ENCODE measurements at regions of chr11 and their contacts with region 1.

Region 1: GRCh38 chr11:67317205-67317887 is 14.0 kb downstream of the SSH3 start:
- DNase-seq: peak; percentile 93
- ATAC-seq: peak; percentile 93
- H3K4me3 ChIP-seq: peak overlapping the region; percentile 64 to 85 (median 84)
- H3K27ac ChIP-seq: peak overlapping the region; percentile 76
- H3K4me1 ChIP-seq: peaks cover 15% of the 10 kb centered on the region
- H3K27me3 ChIP-seq: no peaks in the 10 kb centered on the region
- CTCF ChIP-seq: peak; percentile 100
- EP300 ChIP-seq: no peak
- POLR2A ChIP-seq: peak; percentile 48 to 95; a peak in 2 of 4 replicates
- RAD21 ChIP-seq: peak; percentile 98

Region 2: GRCh38 chr11:67082035-67082791 is 235.1 kb before region 1 on chr11:
- CTCF ChIA-PET with region 1: interaction called, 8 read pairs
- POLR2A ChIA-PET with region 1: interaction called, 6 read pairs
- in situ Hi-C with region 1: loop called (anchors 5 kb)
- intact Hi-C with region 1: loop called (anchors 5 kb)
- DNase-seq: no peak
- ATAC-seq: peak; percentile 21
- H3K4me3 ChIP-seq: peak overlapping the region in 2 of 3 experiments; percentile 36 to 55; a peak in 5 of 6 replicates
- H3K27ac ChIP-seq: no peak overlapping the region
- H3K4me1 ChIP-seq: peaks cover 31% of the 10 kb centered on the region
- H3K27me3 ChIP-seq: peaks cover 1 to 15% of the 10 kb centered on the region in 2 experiments; a peak in 4 of 5 replicates
- CTCF ChIP-seq: peak; percentile 50
- EP300 ChIP-seq: no peak
- POLR2A ChIP-seq: no peak
- RAD21 ChIP-seq: no peak

Region 3: GRCh38 chr11:67118801-67119584 is 198.4 kb before region 1 on chr11 and contains the start of gene KDM2A:
- CTCF ChIA-PET with region 1: no interaction called
- POLR2A ChIA-PET with region 1: no interaction called
- in situ Hi-C with region 1: no loop called
- intact Hi-C with region 1: loop called (anchors 10 kb)
- DNase-seq: peak; percentile 93
- ATAC-seq: peak; percentile 83
- H3K4me3 ChIP-seq: peak within 1 kb of the TSS; percentile 82 to 100 (median 86)
- H3K27ac ChIP-seq: peak within 1 kb of the TSS; percentile 76
- H3K4me1 ChIP-seq: peaks cover 56% of the 10 kb centered on the region
- H3K27me3 ChIP-seq: no peaks in the 10 kb centered on the region
- CTCF ChIP-seq: peak; percentile 47; the same call in 1 of the 2 replicates
- EP300 ChIP-seq: no peak
- POLR2A ChIP-seq: peak; percentile 49 to 82; a peak in 3 of 4 replicates
- RAD21 ChIP-seq: no peak
- total RNA-seq, gene KDM2A: 21.0 and 31.4 TPM in 2 replicates

Region 4: GRCh38 chr11:67202045-67202444 is 115.3 kb before region 1 on chr11:
- CTCF ChIA-PET with region 1: no interaction called
- POLR2A ChIA-PET with region 1: no interaction called
- in situ Hi-C with region 1: no loop called
- intact Hi-C with region 1: no loop called
- DNase-seq: no peak
- ATAC-seq: no peak
- H3K4me3 ChIP-seq: no peak overlapping the region
- H3K27ac ChIP-seq: no peak overlapping the region
- H3K4me1 ChIP-seq: peaks cover 9% of the 10 kb centered on the region; the same call in 1 of the 2 replicates
- H3K27me3 ChIP-seq: no peaks in the 10 kb centered on the region
- CTCF ChIP-seq: no peak
- EP300 ChIP-seq: no peak
- POLR2A ChIP-seq: no peak
- RAD21 ChIP-seq: no peak

Region 5: GRCh38 chr11:67239783-67240575 is 77.4 kb before region 1 on chr11:
- CTCF ChIA-PET with region 1: no interaction called
- POLR2A ChIA-PET with region 1: interaction called, 11 read pairs
- in situ Hi-C with region 1: no loop called
- intact Hi-C with region 1: no loop called
- DNase-seq: peak; percentile 96
- ATAC-seq: peak; percentile 97
- H3K4me3 ChIP-seq: peak overlapping the region; percentile 72 to 82 (median 80)
- H3K27ac ChIP-seq: peak overlapping the region; percentile 89
- H3K4me1 ChIP-seq: peaks cover 41% of the 10 kb centered on the region
- H3K27me3 ChIP-seq: no peaks in the 10 kb centered on the region; a peak in 1 of 5 replicates
- CTCF ChIP-seq: peak; percentile 41
- EP300 ChIP-seq: 0 out of 4 replicates have a peak, but pooled peaks of 1 of the 2 experiments have one; percentile 11
- POLR2A ChIP-seq: peak; percentile 96 to 97
- RAD21 ChIP-seq: peak; percentile 62

Region 6: DNA sequence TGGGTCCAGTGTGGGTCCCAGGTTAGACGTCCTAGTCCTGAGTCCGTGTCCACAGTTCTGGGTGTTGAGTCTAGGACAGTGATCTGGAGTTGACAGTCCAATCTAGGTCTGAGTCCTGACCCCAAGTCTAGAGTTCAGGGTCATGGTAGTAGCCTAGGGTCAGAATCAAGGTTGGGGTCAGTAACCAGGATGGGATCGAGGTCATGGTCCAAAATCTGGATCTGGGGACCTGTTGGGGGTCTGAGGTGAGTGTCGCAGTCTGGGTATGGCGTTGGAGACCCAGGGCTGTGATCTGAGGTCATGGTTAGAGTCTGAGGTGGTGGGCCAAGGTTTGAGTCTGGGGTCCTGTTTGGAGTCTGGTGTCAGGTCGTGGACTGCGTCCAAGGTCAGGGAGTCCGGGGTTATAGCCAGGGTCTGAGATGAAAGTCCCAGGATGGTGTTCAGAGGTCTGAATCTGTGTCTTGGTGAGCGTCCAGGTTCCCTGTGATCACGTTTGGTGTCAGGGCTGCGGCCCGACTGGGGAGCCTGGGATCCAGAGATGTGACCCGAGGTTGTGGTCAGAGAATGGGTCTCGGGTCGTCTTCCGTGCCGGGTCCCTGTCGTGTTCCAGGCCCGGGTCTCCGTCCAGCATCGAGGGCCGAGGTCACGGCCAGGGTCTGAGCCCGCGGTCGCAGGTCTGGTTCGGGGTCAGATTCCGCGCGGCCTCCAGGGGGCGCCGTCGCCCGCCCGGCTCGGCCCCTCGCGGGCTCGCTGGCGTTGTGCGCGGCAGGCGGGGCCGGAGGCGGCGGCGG is 51.5 kb before region 1 on chr11:
- CTCF ChIA-PET with region 1: interaction called, 31 read pairs
- POLR2A ChIA-PET with region 1: interaction called, 24 read pairs
- in situ Hi-C with region 1: loop called (anchors 5 kb)
- intact Hi-C with region 1: loop called (anchors 1 kb)
- DNase-seq: peak; percentile 44
- ATAC-seq: peak; percentile 51
- H3K4me3 ChIP-seq: peak overlapping the region; percentile 43 to 65 (median 49); a peak in 5 of 6 replicates
- H3K27ac ChIP-seq: no peak overlapping the region
- H3K4me1 ChIP-seq: peaks cover 73% of the 10 kb centered on the region
- H3K27me3 ChIP-seq: no peaks in the 10 kb centered on the region
- CTCF ChIP-seq: peak; percentile 83
- EP300 ChIP-seq: no peak
- POLR2A ChIP-seq: no peak
- RAD21 ChIP-seq: peak; percentile 82

Region 7: DNA sequence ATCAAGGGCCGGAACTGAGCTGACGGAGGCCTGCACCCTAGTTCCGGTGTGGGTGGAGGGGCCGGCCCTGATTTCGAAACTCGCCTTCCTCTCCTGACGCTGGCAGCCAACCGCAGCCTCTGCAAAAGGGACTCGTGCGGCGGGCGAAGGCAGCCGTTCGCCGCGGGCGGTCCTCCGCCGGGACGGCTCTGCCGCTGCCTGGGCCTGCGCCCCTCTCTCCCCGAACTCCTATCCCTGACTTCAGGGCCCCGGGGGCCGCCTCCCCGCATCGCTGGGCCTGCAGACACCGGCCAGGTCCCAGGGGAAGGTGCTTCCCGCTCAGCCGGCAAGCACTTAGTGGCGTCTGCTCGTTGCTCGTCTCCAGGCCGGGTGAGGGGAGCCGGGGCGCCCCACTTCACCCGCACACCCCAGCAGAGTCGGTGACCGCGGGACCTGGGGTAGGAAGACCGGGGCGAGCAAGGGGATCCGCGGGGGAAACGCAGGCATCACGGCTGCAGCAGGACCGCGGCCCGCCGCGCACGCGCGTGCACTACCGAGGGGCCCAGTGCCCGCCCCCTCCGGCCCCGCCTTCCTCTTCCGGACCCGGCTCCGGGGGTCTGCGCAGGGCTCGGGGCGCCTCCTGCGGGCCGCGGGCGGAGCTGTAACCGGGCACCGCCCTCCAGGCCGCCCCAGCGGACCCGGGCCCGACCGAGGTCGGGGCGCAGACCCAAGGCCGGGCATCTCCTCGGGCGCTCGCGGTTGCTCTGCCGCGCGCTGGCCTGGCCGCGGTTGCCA is 28.7 kb before region 1 on chr11:
- CTCF ChIA-PET with region 1: interaction called, 3 read pairs
- POLR2A ChIA-PET with region 1: interaction called, 26 read pairs
- in situ Hi-C with region 1: no loop called
- intact Hi-C with region 1: no loop called
- DNase-seq: peak; percentile 85
- ATAC-seq: peak; percentile 80
- H3K4me3 ChIP-seq: peak overlapping the region; percentile 69 to 94 (median 91)
- H3K27ac ChIP-seq: peak overlapping the region; percentile 100
- H3K4me1 ChIP-seq: peaks cover 37% of the 10 kb centered on the region
- H3K27me3 ChIP-seq: no peaks in the 10 kb centered on the region
- CTCF ChIP-seq: peak; percentile 74
- EP300 ChIP-seq: peak in 1 of 2 experiments; percentile 67; a peak in 2 of 4 replicates
- POLR2A ChIP-seq: peak in 1 of 2 experiments; percentile 88; a peak in 2 of 4 replicates
- RAD21 ChIP-seq: peak; percentile 88

Region 8: DNA sequence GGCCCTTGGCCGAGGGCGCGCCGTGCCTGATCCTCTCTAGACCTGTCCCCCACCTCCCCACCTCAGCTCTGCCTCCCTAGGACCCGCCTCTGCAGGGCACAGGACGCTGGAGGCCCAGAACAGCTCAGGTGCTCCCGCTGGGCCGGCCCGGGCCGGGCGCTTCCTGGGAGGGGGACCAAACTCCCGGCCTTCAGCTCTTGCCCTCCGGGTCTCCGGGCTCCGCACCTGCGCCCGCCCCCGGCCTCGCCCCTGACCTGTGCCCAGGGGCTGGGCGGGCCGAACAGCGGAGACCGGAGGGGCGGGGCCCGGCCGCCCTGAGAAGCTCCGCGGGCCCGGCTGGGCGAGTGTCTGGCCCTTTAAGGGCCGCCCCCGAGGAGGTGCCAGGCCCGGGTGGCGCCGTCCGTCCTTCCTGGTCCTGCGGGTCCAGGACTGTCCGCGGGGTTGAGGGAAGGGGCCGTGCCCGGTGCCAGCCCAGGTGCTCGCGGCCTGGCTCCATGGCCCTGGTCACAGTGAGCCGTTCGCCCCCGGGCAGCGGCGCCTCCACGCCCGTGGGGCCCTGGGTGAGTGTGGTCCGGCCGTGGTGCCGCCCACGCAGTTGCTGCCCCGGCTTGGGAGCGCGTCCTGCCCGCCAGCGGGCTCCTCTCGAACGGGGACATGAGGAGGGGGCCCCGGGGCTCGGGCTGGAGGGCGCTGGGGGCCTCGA is 14.1 kb before region 1 on chr11 and contains the start of gene SSH3:
- CTCF ChIA-PET with region 1: no interaction called
- POLR2A ChIA-PET with region 1: interaction called, 35 read pairs
- in situ Hi-C with region 1: no loop called
- intact Hi-C with region 1: no loop called
- DNase-seq: peak; percentile 56
- ATAC-seq: peak; percentile 86
- H3K4me3 ChIP-seq: peak within 1 kb of the TSS; percentile 89 to 98 (median 90)
- H3K27ac ChIP-seq: peak within 1 kb of the TSS; percentile 61
- H3K4me1 ChIP-seq: peaks cover 20% of the 10 kb centered on the region
- H3K27me3 ChIP-seq: no peaks in the 10 kb centered on the region
- CTCF ChIP-seq: 0 out of 2 replicates have a peak, but pooled peaks have one; percentile 5
- EP300 ChIP-seq: no peak
- POLR2A ChIP-seq: peak in 1 of 2 experiments; percentile 69; a peak in 2 of 4 replicates
- RAD21 ChIP-seq: no peak; the same call in 1 of the 2 replicates
- total RNA-seq, gene SSH3: 7.5 and 12.4 TPM in 2 replicates

Region 9: DNA sequence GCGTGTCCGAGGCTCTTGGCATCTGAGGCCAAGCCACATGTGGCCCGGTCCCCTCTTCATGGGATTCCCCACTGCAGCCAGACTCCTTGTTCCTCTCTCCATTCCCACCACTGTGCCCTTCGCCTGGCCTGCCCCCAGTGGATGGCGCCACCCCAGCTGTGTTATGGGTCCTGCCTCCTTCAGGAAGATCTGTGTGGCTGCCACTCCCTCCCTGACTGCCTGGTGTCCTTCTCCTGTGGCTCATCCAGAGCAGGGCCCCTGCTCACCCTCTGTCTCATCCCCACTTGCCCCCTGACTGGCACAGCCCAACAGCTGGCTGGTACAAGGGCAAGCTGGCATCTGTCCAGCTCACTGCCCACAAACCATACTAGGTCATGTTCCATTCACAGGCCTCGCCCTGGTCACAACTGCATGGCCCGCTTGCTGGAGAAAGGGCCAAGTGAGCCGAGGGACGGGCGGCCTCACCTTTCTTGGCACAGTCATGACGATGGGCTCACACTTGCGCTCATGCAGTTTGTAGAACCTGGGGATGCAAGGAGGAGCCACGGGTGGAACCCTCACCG is 122.1 kb after region 1 on chr11:
- CTCF ChIA-PET with region 1: no interaction called
- POLR2A ChIA-PET with region 1: no interaction called
- in situ Hi-C with region 1: no loop called
- intact Hi-C with region 1: no loop called
- DNase-seq: peak; percentile 19
- ATAC-seq: peak; percentile 40
- H3K4me3 ChIP-seq: no peak overlapping the region
- H3K27ac ChIP-seq: no peak overlapping the region
- H3K4me1 ChIP-seq: peaks cover 14% of the 10 kb centered on the region
- H3K27me3 ChIP-seq: no peaks in the 10 kb centered on the region
- CTCF ChIP-seq: peak; percentile 43
- EP300 ChIP-seq: no peak
- POLR2A ChIP-seq: no peak
- RAD21 ChIP-seq: no peak